Colonic mucosa (tissue), 4 donors: ENCODE measurements at regions of chr2 and their contacts with region 1.

Region 1: GRCh38 chr2:112749755-112750559 is 14.5 kb downstream of the CKAP2L start:
- DNase-seq: peak; percentile 80
- H3K4me3 ChIP-seq: no peak overlapping the region
- H3K27ac ChIP-seq: no peak overlapping the region
- H3K4me1 ChIP-seq: no peaks in the 10 kb centered on the region
- H3K27me3 ChIP-seq: no peaks in the 10 kb centered on the region
- CTCF ChIP-seq: peak; percentile 90

Region 2: DNA sequence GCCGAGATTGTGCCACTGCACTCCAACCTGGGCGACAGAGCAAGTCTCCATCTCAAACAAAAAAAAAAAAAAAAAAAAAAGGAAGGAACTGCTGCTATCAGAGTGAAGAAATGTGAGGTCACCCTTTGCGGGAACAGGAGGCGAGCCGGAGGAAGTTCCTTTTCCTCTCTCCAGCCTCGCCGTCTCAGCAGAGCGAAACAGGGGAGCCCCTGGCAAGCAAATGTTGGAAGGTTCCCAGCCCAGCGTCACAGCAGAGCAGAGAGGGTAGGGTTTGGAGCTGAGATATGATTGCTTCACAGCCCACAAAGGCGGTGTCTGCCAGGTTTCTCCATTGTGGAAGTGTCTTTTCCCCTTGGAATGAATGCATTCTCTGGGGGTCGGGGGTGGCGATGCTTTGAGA is 75.7 kb before region 1 on chr2:
- intact Hi-C with region 1: no loop called
- DNase-seq: peak; percentile 34
- H3K4me3 ChIP-seq: no peak overlapping the region
- H3K27ac ChIP-seq: no peak overlapping the region
- H3K4me1 ChIP-seq: no peaks in the 10 kb centered on the region
- H3K27me3 ChIP-seq: no peaks in the 10 kb centered on the region
- CTCF ChIP-seq: no peak

Region 3: DNA sequence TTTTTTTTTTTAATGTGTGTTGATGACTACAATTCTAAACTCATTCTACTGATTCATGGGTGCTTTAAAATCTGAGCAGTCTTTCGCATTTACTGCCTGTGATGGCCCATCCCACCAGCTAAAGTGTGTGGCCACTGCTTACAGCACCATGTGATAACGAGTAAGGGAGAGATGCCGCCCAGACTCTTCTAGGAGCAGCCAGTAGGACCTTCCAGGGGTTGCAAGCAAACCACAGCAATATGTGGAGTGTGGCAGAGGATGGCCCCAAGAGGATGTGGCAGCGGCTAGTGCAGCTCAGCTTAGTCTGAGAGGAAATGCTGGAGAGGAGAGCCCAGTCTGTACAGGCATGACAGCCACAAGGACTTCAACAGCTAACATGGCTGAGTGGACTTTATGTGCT is 71.7 kb after region 1 on chr2:
- intact Hi-C with region 1: no loop called
- DNase-seq: no peak
- H3K4me3 ChIP-seq: no peak overlapping the region
- H3K27ac ChIP-seq: no peak overlapping the region
- H3K4me1 ChIP-seq: no peaks in the 10 kb centered on the region
- H3K27me3 ChIP-seq: no peaks in the 10 kb centered on the region
- CTCF ChIP-seq: no peak

Region 4: GRCh38 chr2:112884869-112885505 is 135.0 kb after region 1 on chr2:
- intact Hi-C with region 1: loop called (anchors 5 kb)
- DNase-seq: peak; percentile 86
- H3K4me3 ChIP-seq: no peak overlapping the region
- H3K27ac ChIP-seq: no peak overlapping the region
- H3K4me1 ChIP-seq: peaks cover under 1% of the 10 kb centered on the region
- H3K27me3 ChIP-seq: no peaks in the 10 kb centered on the region
- CTCF ChIP-seq: peak; percentile 97

Region 5: GRCh38 chr2:112896909-112897623 is 147.1 kb after region 1 on chr2:
- intact Hi-C with region 1: no loop called
- DNase-seq: no peak
- H3K4me3 ChIP-seq: no peak overlapping the region
- H3K27ac ChIP-seq: peak overlapping the region; percentile 33
- H3K4me1 ChIP-seq: no peaks in the 10 kb centered on the region
- H3K27me3 ChIP-seq: no peaks in the 10 kb centered on the region
- CTCF ChIP-seq: no peak

Region 6: GRCh38 chr2:112958428-112959108 is 208.6 kb after region 1 on chr2:
- intact Hi-C with region 1: loop called (anchors 5 kb)
- DNase-seq: peak; percentile 36
- H3K4me3 ChIP-seq: no peak overlapping the region
- H3K27ac ChIP-seq: no peak overlapping the region
- H3K4me1 ChIP-seq: no peaks in the 10 kb centered on the region
- H3K27me3 ChIP-seq: no peaks in the 10 kb centered on the region
- CTCF ChIP-seq: peak; percentile 81

Region 7: GRCh38 chr2:113041871-113042508 is 292.0 kb after region 1 on chr2:
- intact Hi-C with region 1: no loop called
- DNase-seq: no peak
- H3K4me3 ChIP-seq: no peak overlapping the region
- H3K27ac ChIP-seq: no peak overlapping the region
- H3K4me1 ChIP-seq: no peaks in the 10 kb centered on the region
- H3K27me3 ChIP-seq: no peaks in the 10 kb centered on the region
- CTCF ChIP-seq: no peak